CD4-positive, alpha-beta memory T cell (primary cell): ENCODE measurements at regions of chr20 and their contacts with region 1.

Region 1: GRCh38 chr20:52410182-52410647 is 218.6 kb upstream of the ZFP64 start:
- DNase-seq: peak; percentile 82 to 91 (median 86)
- H3K4me3 ChIP-seq: peak overlapping the region; percentile 1 to 37
- H3K4me3 Mint-ChIP-seq: peak overlapping the region; percentile 52 to 85 (median 80)
- H3K27ac ChIP-seq: peak overlapping the region; percentile 75
- H3K27ac Mint-ChIP-seq: peak overlapping the region; percentile 95 to 100 (median 99)
- H3K4me1 ChIP-seq: peaks cover 79% of the 10 kb centered on the region
- H3K4me1 Mint-ChIP-seq: peaks cover 55 to 88% (median 70%) of the 10 kb centered on the region in 4 donors
- H3K27me3 ChIP-seq: no peaks in the 10 kb centered on the region
- H3K27me3 Mint-ChIP-seq: no peaks in the 10 kb centered on the region

Region 2: GRCh38 chr20:52291109-52291508 is 119.1 kb before region 1 on chr20:
- CTCF ChIA-PET with region 1: no interaction called
- POLR2A ChIA-PET with region 1: no interaction called
- intact Hi-C with region 1: no loop called
- DNase-seq: no peak
- H3K4me3 ChIP-seq: no peak overlapping the region
- H3K4me3 Mint-ChIP-seq: no peak overlapping the region
- H3K27ac ChIP-seq: no peak overlapping the region
- H3K27ac Mint-ChIP-seq: no peak overlapping the region
- H3K4me1 ChIP-seq: no peaks in the 10 kb centered on the region
- H3K4me1 Mint-ChIP-seq: peaks cover 0 to 3% (median 0%) of the 10 kb centered on the region in 4 donors
- H3K27me3 ChIP-seq: no peaks in the 10 kb centered on the region
- H3K27me3 Mint-ChIP-seq: peaks cover 2% of the 10 kb centered on the region in 2 donors

Region 3: DNA sequence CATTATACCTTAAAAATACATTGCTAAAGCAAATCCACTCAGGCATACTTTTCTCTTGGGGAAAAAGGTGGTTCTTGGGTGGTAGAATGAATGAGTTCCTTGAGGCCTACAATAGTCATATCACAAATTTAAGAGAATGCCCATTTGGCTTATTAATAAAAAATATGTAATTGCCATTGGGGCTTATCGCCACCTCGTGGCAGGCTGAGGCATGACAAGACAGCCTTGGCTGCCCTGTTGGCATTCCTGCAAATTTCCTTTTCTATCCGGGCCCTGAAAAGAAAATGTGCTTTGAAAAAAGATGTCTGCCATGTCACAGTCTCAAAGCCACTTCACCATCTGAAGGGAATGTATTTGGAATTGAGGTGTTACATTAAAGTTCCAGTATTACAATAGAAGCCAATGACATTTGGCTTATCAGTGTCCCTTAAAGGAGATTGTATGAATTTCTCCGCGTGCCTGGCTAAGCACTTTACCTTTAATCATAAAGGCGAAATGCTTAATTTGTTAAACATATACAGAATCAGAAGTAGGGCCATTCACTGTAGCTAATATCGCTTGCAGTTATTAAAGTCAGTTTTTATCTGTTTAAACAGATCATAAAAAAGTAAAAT is 30.4 kb before region 1 on chr20:
- CTCF ChIA-PET with region 1: interaction called, 24 read pairs
- POLR2A ChIA-PET with region 1: interaction called, 11 read pairs
- intact Hi-C with region 1: loop called (anchors 2 kb)
- DNase-seq: peak in 3 of 5 donors; percentile 19 to 28 (median 23)
- H3K4me3 ChIP-seq: no peak overlapping the region
- H3K4me3 Mint-ChIP-seq: no peak overlapping the region
- H3K27ac ChIP-seq: no peak overlapping the region
- H3K27ac Mint-ChIP-seq: peak overlapping the region in 2 of 7 donors; percentile 1 to 37
- H3K4me1 ChIP-seq: peaks cover 10% of the 10 kb centered on the region
- H3K4me1 Mint-ChIP-seq: peaks cover 10 to 24% (median 13%) of the 10 kb centered on the region in 4 donors
- H3K27me3 ChIP-seq: no peaks in the 10 kb centered on the region
- H3K27me3 Mint-ChIP-seq: no peaks in the 10 kb centered on the region

Region 4: DNA sequence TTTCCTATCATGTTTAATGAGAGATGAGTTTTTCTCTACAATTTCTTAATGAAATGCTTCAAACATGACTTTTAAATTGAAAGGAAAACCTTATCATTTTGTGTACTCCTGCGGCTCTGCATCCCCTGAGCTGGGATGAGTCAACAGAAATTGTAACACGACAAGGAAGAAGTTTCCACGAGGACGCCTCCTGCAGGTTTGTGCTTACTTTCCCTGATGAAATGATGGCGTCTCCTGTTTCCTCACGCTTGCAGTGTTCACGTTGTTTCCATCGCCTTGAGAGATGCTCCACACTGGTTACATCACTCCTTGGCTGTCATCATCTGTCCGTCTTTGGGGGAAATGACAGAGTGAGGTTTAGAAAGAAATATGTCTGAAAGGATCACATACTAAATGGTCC is 15.0 kb after region 1 on chr20:
- CTCF ChIA-PET with region 1: interaction called, 8 read pairs
- POLR2A ChIA-PET with region 1: interaction called, 4 read pairs
- intact Hi-C with region 1: loop called (anchors 2 kb)
- DNase-seq: no peak
- H3K4me3 ChIP-seq: no peak overlapping the region
- H3K4me3 Mint-ChIP-seq: no peak overlapping the region
- H3K27ac ChIP-seq: no peak overlapping the region
- H3K27ac Mint-ChIP-seq: peak overlapping the region in 2 of 7 donors; percentile 32 to 72
- H3K4me1 ChIP-seq: no peaks in the 10 kb centered on the region
- H3K4me1 Mint-ChIP-seq: peaks cover 0 to 13% (median 7%) of the 10 kb centered on the region in 4 donors
- H3K27me3 ChIP-seq: no peaks in the 10 kb centered on the region
- H3K27me3 Mint-ChIP-seq: no peaks in the 10 kb centered on the region

Region 5: GRCh38 chr20:52972190-52972937 is 562.1 kb after region 1 on chr20 and contains the start of gene TSHZ2:
- CTCF ChIA-PET with region 1: interaction called, 3 read pairs
- POLR2A ChIA-PET with region 1: interaction called, 24 read pairs
- intact Hi-C with region 1: loop called (anchors 10 kb)
- DNase-seq: peak; percentile 45 to 77 (median 60)
- H3K4me3 ChIP-seq: peak within 1 kb of the TSS; percentile 49 to 63
- H3K4me3 Mint-ChIP-seq: peak within 1 kb of the TSS; percentile 91 to 98 (median 96)
- H3K27ac ChIP-seq: peak within 1 kb of the TSS; percentile 71
- H3K27ac Mint-ChIP-seq: peak within 1 kb of the TSS; percentile 89 to 98 (median 96)
- H3K4me1 ChIP-seq: peaks cover 29% of the 10 kb centered on the region
- H3K4me1 Mint-ChIP-seq: peaks cover 11 to 56% (median 29%) of the 10 kb centered on the region in 4 donors
- H3K27me3 ChIP-seq: no peaks in the 10 kb centered on the region
- H3K27me3 Mint-ChIP-seq: peaks cover 5 to 28% of the 10 kb centered on the region in 2 donors
- total RNA-seq, gene TSHZ2: 30.2 to 31.8 TPM

Region 6: GRCh38 chr20:53001498-53002301 is 591.5 kb after region 1 on chr20:
- CTCF ChIA-PET with region 1: interaction called, 3 read pairs
- POLR2A ChIA-PET with region 1: interaction called, 22 read pairs
- intact Hi-C with region 1: loop called (anchors 10 kb)
- DNase-seq: peak in 4 of 5 donors; percentile 30 to 52 (median 38)
- H3K4me3 ChIP-seq: peak overlapping the region; percentile 30 to 39
- H3K4me3 Mint-ChIP-seq: peak overlapping the region; percentile 74 to 92 (median 84)
- H3K27ac ChIP-seq: peak overlapping the region; percentile 41
- H3K27ac Mint-ChIP-seq: peak overlapping the region; percentile 87 to 98 (median 94)
- H3K4me1 ChIP-seq: peaks cover 42% of the 10 kb centered on the region
- H3K4me1 Mint-ChIP-seq: peaks cover 24 to 50% (median 44%) of the 10 kb centered on the region in 4 donors
- H3K27me3 ChIP-seq: no peaks in the 10 kb centered on the region
- H3K27me3 Mint-ChIP-seq: peaks cover 0 to 5% of the 10 kb centered on the region in 2 donors